Activated CD4-positive, alpha-beta T cell treated with anti-CD3 and anti-CD28 coated beads for 36 hours (primary cell): ENCODE measurements at regions of chr3 and their contacts with region 1.

Region 1: DNA sequence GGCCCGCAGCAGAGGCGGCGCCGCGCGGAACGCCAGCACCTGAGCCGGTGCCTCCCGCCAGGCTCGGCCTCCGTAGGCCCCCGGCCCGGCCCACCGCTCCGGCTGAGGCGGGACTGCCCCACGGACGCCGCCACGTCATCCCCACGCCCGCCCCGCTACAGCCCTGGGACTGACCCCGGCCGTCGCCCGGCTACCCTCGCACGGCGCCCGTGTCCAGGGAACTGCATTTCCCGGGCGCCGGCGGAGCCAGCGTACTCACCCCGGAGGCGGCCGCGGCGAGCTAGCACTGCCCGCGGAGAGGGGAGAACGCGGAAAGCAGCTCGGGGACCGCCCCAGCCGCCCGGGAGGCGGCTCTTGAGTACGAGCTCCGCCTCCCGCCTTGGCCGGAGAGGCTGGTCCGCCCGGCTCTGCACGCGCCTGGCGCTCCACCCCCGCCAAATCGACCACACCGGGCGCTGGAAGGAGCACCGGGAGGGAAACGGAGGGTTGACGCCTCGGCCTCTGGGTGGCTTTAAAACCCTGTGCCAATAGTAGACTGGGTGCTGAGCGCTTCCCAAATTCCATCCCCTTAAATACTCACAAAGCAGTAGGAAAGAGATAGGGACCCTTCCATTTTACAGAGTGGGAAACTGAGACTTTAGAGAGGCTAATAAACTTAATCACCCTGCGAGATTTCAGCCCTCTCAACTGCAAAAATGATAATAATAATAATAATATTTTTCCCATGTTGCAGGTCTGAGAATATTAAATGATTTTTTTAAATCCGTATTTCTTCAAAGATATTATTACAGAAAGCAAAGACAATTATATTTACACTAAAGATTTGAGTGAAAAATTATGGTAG is at the start of gene B4GALT4:
- DNase-seq: peak; percentile 86
- ATAC-seq: peak; percentile 75
- H3K4me3 Mint-ChIP-seq: peak within 1 kb of the TSS; percentile 89
- H3K27ac Mint-ChIP-seq: peak within 1 kb of the TSS; percentile 99
- H3K4me1 Mint-ChIP-seq: peaks cover 40% of the 10 kb centered on the region
- H3K27me3 Mint-ChIP-seq: no peaks in the 10 kb centered on the region
- total RNA-seq, gene B4GALT4: 16.6 to 16.7 TPM

Region 2: GRCh38 chr3:117903226-117903625 is 1337.6 kb before region 1 on chr3:
- CTCF ChIA-PET with region 1: no interaction called
- POLR2A ChIA-PET with region 1: no interaction called
- intact Hi-C with region 1: no loop called
- DNase-seq: no peak
- ATAC-seq: no peak
- H3K4me3 Mint-ChIP-seq: no peak overlapping the region
- H3K27ac Mint-ChIP-seq: no peak overlapping the region
- H3K4me1 Mint-ChIP-seq: no peaks in the 10 kb centered on the region
- H3K27me3 Mint-ChIP-seq: no peaks in the 10 kb centered on the region

Region 3: DNA sequence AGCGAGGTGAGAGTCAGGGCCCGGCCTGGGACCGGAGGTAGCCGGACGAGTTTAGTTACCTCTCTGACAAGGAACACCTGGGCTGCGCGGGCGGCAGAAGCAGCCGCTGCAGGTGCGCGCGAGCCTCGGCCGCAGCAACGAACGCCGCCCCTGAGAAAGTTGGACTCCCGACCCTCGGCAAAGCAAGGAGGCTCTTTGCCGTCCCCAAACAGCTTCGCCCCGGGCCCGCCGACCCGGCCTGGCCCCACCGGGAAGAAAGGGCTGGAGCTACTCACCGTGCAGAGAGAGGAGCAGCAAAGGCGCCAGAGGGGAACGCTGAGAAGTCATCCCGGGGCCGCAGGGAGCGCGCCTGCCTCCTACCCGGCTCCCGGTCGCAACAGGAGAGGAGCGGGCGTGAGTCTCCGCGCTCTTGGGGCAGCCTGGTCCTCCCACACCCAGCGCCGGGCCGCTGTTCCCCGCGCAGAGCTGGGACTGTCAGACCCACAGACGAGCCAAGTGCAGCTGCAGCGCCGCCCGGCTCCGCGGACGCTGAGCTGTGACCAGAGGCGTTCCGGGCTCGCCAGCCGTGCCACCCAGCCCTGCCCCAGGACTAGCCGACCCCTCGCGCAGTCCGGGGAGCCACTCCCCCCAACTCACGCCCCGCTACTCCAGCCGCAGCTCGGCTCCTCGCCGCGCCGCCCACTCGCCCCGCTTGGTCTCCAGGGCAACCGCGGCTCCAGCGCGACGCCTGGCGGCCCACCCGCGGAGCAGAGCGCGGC is 206.4 kb before region 1 on chr3 and contains the start of gene IGSF11:
- CTCF ChIA-PET with region 1: interaction called, 4 read pairs
- POLR2A ChIA-PET with region 1: no interaction called
- intact Hi-C with region 1: loop called (anchors 1 to 10 kb)
- DNase-seq: peak; percentile 82
- ATAC-seq: peak; percentile 93
- H3K4me3 Mint-ChIP-seq: peak within 1 kb of the TSS; percentile 77
- H3K27ac Mint-ChIP-seq: no peak within 1 kb of the TSS
- H3K4me1 Mint-ChIP-seq: peaks cover 6% of the 10 kb centered on the region
- H3K27me3 Mint-ChIP-seq: peaks cover 33% of the 10 kb centered on the region
- total RNA-seq, gene IGSF11: 0.09 to 0.23 TPM

Region 4: DNA sequence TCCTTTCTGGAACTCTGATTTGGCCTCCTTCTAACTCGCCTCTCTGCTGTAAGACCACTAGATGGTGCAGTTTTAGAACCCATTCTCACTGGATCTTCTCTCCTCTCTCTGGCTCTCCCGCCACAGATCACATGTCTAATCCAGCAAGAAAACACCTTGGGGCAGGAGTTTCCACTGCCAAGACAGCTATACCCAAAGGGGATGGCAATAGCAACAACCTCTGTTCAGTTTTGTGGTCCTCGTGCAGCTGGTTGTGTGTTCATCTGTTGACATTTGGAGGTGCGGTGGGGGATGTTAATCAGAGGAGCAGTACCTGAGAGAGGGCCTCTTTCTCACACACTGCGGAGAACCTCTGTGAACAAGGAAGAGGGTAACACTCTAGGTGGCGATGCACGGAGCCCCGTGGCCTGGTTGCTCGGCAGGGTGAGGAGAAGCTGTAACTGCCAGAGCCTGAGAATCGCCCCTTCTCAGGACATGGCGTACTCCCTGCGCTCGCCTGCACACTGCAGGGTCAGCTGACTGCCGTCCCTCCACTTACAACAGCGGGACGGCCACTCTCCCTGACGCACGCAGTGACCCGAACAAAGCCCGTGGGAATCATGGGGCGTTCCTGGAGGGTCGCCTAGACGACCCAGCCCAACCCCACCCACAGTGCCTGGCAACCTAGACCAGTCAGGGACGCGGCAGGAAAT is 95.2 kb before region 1 on chr3 and contains the start of gene TEX55:
- CTCF ChIA-PET with region 1: interaction called, 36 read pairs
- POLR2A ChIA-PET with region 1: no interaction called
- intact Hi-C with region 1: loop called (anchors 1 kb)
- DNase-seq: peak; percentile 26
- ATAC-seq: peak; percentile 81
- H3K4me3 Mint-ChIP-seq: no peak within 1 kb of the TSS
- H3K27ac Mint-ChIP-seq: peak within 1 kb of the TSS; percentile 23
- H3K4me1 Mint-ChIP-seq: peaks cover 4% of the 10 kb centered on the region
- H3K27me3 Mint-ChIP-seq: no peaks in the 10 kb centered on the region
- total RNA-seq, gene TEX55: not detected

Region 5: DNA sequence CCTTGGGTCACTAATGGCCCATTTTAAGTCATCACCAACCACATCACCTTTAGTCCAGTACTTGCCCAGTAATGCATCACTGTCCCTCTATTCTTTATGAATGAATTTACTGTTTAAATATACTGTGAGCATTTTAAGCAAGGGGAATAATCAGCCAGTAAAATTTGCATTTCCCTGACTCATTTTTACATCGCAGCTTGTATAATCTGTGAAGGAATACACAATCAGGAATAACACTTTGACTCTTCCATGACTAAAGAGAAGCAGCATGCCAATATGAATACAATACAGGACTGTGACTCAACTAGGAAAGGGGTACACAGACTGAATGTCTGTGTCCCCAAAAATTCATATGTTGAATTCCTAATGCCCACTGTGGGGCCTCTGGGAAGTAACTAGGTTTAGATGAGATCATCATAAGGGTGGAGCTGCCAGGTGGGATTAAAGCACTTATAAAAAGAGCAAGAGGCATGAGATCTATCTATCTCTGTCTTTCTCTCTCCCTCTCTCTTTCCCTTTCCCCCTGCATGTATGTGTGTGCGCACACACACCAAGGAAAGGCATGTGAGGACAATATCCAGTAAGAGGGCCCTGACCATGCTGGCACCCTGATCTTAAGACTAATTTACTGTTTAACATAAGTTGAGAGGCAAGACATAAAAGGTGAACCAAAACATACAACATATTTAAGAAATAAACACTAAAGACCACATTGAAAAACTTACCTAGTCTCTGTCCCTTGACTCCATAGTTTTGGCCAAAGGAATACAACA is 12.3 kb before region 1 on chr3:
- CTCF ChIA-PET with region 1: interaction called, 18 read pairs
- POLR2A ChIA-PET with region 1: no interaction called
- intact Hi-C with region 1: no loop called
- DNase-seq: no peak
- ATAC-seq: peak; percentile 67
- H3K4me3 Mint-ChIP-seq: no peak overlapping the region
- H3K27ac Mint-ChIP-seq: no peak overlapping the region
- H3K4me1 Mint-ChIP-seq: peaks cover 57% of the 10 kb centered on the region
- H3K27me3 Mint-ChIP-seq: no peaks in the 10 kb centered on the region

Region 6: GRCh38 chr3:119322835-119323722 is 82.3 kb after region 1 on chr3:
- CTCF ChIA-PET with region 1: interaction called, 3 read pairs
- POLR2A ChIA-PET with region 1: interaction called, 5 read pairs
- intact Hi-C with region 1: loop called (anchors 1 to 2 kb)
- DNase-seq: peak; percentile 97
- ATAC-seq: peak; percentile 92
- H3K4me3 Mint-ChIP-seq: peak overlapping the region; percentile 83
- H3K27ac Mint-ChIP-seq: peak overlapping the region; percentile 87
- H3K4me1 Mint-ChIP-seq: peaks cover 46% of the 10 kb centered on the region
- H3K27me3 Mint-ChIP-seq: no peaks in the 10 kb centered on the region

Region 7: DNA sequence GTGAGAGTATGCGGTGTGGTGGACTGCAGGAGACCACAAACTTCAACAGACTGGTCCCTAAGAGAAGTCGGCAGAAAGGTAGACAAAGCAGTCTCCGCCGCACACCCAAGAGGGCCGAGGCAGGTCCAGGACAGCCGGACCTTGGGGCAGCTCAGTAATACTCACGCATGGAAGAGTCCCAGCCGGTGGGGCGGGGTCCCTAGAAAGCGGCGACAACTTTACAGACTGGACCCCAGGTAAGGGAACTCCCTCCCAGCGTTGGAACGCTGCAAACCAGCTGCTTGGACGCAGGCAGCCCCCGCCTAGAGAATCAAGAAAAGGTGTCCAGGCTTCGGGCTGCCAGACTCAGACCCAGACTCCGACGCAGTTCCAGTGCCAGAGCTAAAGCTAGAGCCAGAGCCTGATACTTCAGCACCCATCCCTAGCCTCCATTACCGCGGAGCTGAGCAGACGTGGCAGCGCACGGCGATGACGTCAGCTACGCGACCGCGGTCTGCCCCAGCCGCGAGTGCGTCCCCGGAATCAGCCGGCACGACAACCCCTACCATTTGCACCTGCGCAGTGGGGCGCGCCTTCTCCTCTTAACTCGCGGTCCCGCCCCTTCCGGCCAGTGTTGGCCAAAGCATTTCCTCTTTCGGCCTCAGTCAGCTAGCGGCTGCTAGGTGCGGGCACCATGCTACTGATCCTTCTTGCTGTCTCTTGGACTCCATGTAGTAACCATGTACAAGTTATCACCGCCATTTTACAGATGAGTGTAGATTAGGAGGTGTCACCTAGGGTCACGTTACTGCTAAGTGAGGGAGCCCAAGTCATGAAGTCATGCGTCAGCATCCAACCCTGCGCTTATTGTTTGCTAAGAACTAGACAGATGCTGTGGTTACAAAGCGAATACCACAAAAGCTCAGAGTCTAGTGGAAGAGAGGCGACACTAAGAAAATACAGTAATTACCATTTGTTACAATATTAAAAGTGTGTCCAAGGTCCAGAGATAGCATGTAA is 222.7 kb after region 1 on chr3 and contains the start of gene TMEM39A:
- CTCF ChIA-PET with region 1: interaction called, 5 read pairs
- POLR2A ChIA-PET with region 1: interaction called, 10 read pairs
- intact Hi-C with region 1: loop called in 1 of 2 experiments (anchors 1 kb)
- DNase-seq: peak; percentile 99
- ATAC-seq: peak; percentile 89
- H3K4me3 Mint-ChIP-seq: peak within 1 kb of the TSS; percentile 99
- H3K27ac Mint-ChIP-seq: peak within 1 kb of the TSS; percentile 91
- H3K4me1 Mint-ChIP-seq: peaks cover 41% of the 10 kb centered on the region
- H3K27me3 Mint-ChIP-seq: no peaks in the 10 kb centered on the region
- total RNA-seq, gene TMEM39A: 24.5 to 30.5 TPM